Motor neuron (in vitro differentiated cells): ENCODE measurements at regions of chr12 and their contacts with region 1.

Region 1: GRCh38 chr12:40622246-40622838 is 69.9 kb upstream of the CNTN1 start:
- ATAC-seq: peak in 3 of 8 experiments; percentile 41 to 52 (median 49)
- H3K4me3 ChIP-seq: no peak overlapping the region
- H3K27ac ChIP-seq: no peak overlapping the region
- H3K4me1 ChIP-seq: no peaks in the 10 kb centered on the region

Region 2: DNA sequence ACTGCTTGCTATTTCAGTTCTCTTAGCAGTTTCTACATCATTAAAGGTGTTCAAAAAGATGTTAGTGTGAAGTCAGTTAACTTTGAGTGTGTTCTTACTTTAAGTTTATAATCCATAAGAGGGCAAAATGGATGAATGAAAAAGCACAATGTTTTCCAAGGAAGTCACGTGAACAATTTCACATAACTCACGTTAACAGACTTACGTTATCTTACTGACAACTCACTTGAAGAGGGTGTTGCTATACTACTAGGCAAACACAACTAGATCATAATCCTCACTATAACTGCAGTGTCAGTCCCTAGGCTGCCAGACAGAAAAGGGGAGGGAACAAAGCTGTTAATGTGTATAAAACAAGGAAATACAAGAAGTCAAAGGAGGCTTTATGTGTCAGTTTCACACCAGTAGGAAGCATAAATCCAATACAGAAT is 522.9 kb before region 1 on chr12:
- in situ Hi-C with region 1: no loop called
- ATAC-seq: peak in 1 of 8 experiments; percentile 68
- H3K4me3 ChIP-seq: no peak overlapping the region
- H3K27ac ChIP-seq: no peak overlapping the region
- H3K4me1 ChIP-seq: peaks cover 11 to 17% of the 10 kb centered on the region in 2 donors

Region 3: GRCh38 chr12:40911676-40912075 is 289.3 kb after region 1 on chr12:
- in situ Hi-C with region 1: loop called in 4 of 9 experiments (anchors 10 to 25 kb)
- ATAC-seq: peak in 2 of 8 experiments; percentile 32 to 47
- H3K4me3 ChIP-seq: no peak overlapping the region
- H3K27ac ChIP-seq: no peak overlapping the region
- H3K4me1 ChIP-seq: peaks cover 0 to 8% of the 10 kb centered on the region in 2 donors

Region 4: DNA sequence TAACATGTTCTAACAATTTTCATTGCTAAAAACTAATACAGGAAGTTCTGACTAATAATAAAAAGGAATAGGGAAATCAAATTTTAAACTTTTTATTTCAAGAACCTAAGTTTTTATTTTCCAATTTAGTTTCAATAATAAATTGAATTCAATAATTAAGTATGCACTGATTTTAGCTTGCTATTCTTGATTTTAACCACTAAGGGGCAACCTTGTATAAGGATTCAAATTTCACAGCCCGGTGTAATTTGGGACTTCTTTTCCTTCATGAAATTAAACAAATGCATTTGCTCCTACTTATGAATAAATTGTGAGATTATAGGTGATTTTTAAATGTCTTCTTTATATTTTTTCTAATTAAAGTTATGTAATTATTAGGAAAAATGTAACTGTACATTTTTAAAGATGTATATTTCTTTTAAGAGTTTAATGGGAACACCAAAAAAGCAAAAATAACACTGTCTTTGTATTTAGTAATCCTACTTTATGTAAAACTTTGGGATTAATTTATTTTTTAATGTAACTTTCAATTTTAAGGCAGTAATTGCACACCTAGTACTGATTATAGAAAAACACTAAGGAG is 324.4 kb after region 1 on chr12:
- in situ Hi-C with region 1: loop called in 1 of 9 experiments (anchors 25 kb)
- ATAC-seq: no peak
- H3K4me3 ChIP-seq: no peak overlapping the region
- H3K27ac ChIP-seq: no peak overlapping the region
- H3K4me1 ChIP-seq: no peaks in the 10 kb centered on the region